Endothelial cell of umbilical vein (primary cell): ENCODE measurements at regions of chr4 and their contacts with region 1.

Region 1: DNA sequence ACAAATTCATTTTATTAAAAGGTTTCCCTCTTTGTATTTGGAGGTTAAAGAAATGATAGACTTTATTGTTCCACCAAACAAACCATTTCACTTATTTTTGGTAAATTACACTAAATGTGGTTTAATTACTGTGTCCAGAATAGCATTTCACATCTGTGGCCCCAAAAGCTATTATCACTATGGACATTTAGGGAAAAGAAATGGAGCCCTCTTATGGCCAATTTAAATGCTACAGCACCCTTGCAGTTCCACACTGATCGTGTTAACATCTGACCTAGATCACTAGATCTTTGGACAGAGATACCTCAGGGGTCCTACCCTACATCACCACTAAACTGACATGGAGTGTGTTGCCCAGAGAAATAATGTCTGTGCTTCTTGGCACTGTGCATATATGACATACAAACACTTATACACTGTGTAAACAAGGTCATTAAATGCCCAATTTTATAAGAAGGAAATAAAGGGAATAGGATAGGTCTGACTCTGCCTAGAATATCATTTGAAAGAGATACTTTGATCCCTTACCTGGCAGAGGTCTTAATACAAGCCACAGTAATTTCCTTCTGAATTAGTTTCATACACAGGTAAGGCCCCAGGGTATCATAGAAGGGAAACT is 163.9 kb downstream of the KDR start:
- DNase-seq: peak; percentile 69
- H3K4me3 ChIP-seq: no peak overlapping the region
- H3K27ac ChIP-seq: no peak overlapping the region
- H3K4me1 ChIP-seq: no peaks in the 10 kb centered on the region
- H3K27me3 ChIP-seq: peaks cover 5 to 14% of the 10 kb centered on the region in 2 experiments
- CTCF ChIP-seq: peak; percentile 46 to 50
- POLR2A ChIP-seq: no peak

Region 2: GRCh38 chr4:54322818-54323417 is 638.5 kb before region 1 on chr4:
- CTCF ChIA-PET with region 1: interaction called, 33 read pairs
- POLR2A ChIA-PET with region 1: no interaction called
- dilution Hi-C with region 1: no loop called
- intact Hi-C with region 1: loop called (anchors 1 kb)
- DNase-seq: peak; percentile 60
- H3K4me3 ChIP-seq: no peak overlapping the region
- H3K27ac ChIP-seq: no peak overlapping the region
- H3K4me1 ChIP-seq: no peaks in the 10 kb centered on the region
- H3K27me3 ChIP-seq: peaks cover 0 to 2% of the 10 kb centered on the region in 2 experiments
- CTCF ChIP-seq: peak; percentile 58 to 73
- POLR2A ChIP-seq: no peak

Region 3: GRCh38 chr4:54440394-54441136 is 520.9 kb before region 1 on chr4:
- CTCF ChIA-PET with region 1: interaction called, 3 read pairs
- POLR2A ChIA-PET with region 1: no interaction called
- dilution Hi-C with region 1: no loop called
- intact Hi-C with region 1: loop called (anchors 2 kb)
- DNase-seq: peak; percentile 42
- H3K4me3 ChIP-seq: no peak overlapping the region
- H3K27ac ChIP-seq: no peak overlapping the region
- H3K4me1 ChIP-seq: no peaks in the 10 kb centered on the region
- H3K27me3 ChIP-seq: peaks cover 0 to 7% of the 10 kb centered on the region in 2 experiments
- CTCF ChIP-seq: peak; percentile 30 to 34
- POLR2A ChIP-seq: no peak

Region 4: GRCh38 chr4:54675721-54676461 is 285.6 kb before region 1 on chr4:
- CTCF ChIA-PET with region 1: interaction called, 11 read pairs
- POLR2A ChIA-PET with region 1: no interaction called
- dilution Hi-C with region 1: no loop called
- intact Hi-C with region 1: no loop called
- DNase-seq: no peak
- H3K4me3 ChIP-seq: no peak overlapping the region
- H3K27ac ChIP-seq: no peak overlapping the region
- H3K4me1 ChIP-seq: no peaks in the 10 kb centered on the region
- H3K27me3 ChIP-seq: peaks cover 0 to 9% of the 10 kb centered on the region in 2 experiments
- CTCF ChIP-seq: no peak
- POLR2A ChIP-seq: no peak

Region 5: GRCh38 chr4:54872261-54872660 is 89.2 kb before region 1 on chr4:
- CTCF ChIA-PET with region 1: no interaction called
- POLR2A ChIA-PET with region 1: no interaction called
- dilution Hi-C with region 1: no loop called
- intact Hi-C with region 1: no loop called
- DNase-seq: no peak
- H3K4me3 ChIP-seq: no peak overlapping the region
- H3K27ac ChIP-seq: no peak overlapping the region
- H3K4me1 ChIP-seq: no peaks in the 10 kb centered on the region
- H3K27me3 ChIP-seq: peaks cover 7 to 16% of the 10 kb centered on the region in 2 experiments
- CTCF ChIP-seq: no peak
- POLR2A ChIP-seq: no peak

Region 6: DNA sequence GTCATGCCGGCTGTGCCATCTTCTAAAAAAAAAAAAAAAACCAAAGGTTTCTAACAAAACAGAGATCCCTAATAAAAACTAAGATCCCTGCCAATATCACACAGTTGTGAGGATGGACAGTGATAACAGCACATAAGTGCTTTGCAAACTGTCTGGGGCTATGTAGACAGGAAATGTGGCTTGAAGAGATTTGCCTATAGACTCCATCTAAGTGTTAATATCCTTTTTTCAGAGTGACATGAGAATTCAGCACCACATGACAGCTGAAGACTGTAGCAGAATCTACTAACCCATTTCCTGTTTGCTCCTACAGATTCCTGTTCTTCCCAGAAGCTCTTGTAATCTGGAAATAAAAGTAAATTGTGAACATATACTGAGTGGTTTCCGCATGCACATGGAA is 51.5 kb before region 1 on chr4:
- CTCF ChIA-PET with region 1: no interaction called
- POLR2A ChIA-PET with region 1: no interaction called
- dilution Hi-C with region 1: no loop called
- intact Hi-C with region 1: no loop called
- DNase-seq: peak; percentile 31
- H3K4me3 ChIP-seq: no peak overlapping the region
- H3K27ac ChIP-seq: no peak overlapping the region
- H3K4me1 ChIP-seq: no peaks in the 10 kb centered on the region
- H3K27me3 ChIP-seq: peaks cover 22 to 35% of the 10 kb centered on the region in 2 experiments
- CTCF ChIP-seq: no peak
- POLR2A ChIP-seq: no peak

Region 7: DNA sequence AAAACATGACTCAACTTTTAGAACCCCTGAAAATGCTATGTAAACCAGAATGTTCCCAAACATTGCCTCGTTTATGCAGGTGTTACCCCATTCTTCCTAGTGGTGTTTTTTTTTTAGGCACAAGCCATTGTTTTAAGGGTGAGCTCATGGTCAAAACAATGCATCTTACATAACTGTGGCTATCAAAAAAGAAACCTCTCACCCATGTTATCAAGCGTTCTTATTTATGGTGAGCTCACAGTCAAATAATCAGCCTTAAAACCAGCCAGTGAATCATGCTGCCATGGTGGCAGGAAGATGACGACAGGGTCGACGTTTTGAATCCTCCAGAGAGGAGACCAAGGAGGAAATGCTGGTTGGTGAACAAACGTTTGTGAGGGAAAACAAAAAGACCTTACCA is 31.2 kb before region 1 on chr4:
- CTCF ChIA-PET with region 1: interaction called, 12 read pairs
- POLR2A ChIA-PET with region 1: no interaction called
- dilution Hi-C with region 1: no loop called
- intact Hi-C with region 1: no loop called
- DNase-seq: peak; percentile 99
- H3K4me3 ChIP-seq: peak overlapping the region in 1 of 3 experiments; percentile 28
- H3K27ac ChIP-seq: peak overlapping the region; percentile 99
- H3K4me1 ChIP-seq: peaks cover 33% of the 10 kb centered on the region
- H3K27me3 ChIP-seq: no peaks in the 10 kb centered on the region
- CTCF ChIP-seq: no peak
- POLR2A ChIP-seq: no peak

Region 8: GRCh38 chr4:55012363-55013230 is 51.1 kb after region 1 on chr4:
- CTCF ChIA-PET with region 1: no interaction called
- POLR2A ChIA-PET with region 1: no interaction called
- dilution Hi-C with region 1: no loop called
- intact Hi-C with region 1: no loop called
- DNase-seq: peak; percentile 82
- H3K4me3 ChIP-seq: no peak overlapping the region
- H3K27ac ChIP-seq: no peak overlapping the region
- H3K4me1 ChIP-seq: peaks cover 4% of the 10 kb centered on the region
- H3K27me3 ChIP-seq: no peaks in the 10 kb centered on the region
- CTCF ChIP-seq: no peak
- POLR2A ChIP-seq: no peak